Activated naive CD4-positive, alpha-beta T cell treated with anti-CD3 and anti-CD28 coated beads, Interleukin-2, amount 10 ng/mL, durations not matched to agents 7 days and 5 days (primary cell): ENCODE measurements at regions of chrX and their contacts with region 1.

Region 1: DNA sequence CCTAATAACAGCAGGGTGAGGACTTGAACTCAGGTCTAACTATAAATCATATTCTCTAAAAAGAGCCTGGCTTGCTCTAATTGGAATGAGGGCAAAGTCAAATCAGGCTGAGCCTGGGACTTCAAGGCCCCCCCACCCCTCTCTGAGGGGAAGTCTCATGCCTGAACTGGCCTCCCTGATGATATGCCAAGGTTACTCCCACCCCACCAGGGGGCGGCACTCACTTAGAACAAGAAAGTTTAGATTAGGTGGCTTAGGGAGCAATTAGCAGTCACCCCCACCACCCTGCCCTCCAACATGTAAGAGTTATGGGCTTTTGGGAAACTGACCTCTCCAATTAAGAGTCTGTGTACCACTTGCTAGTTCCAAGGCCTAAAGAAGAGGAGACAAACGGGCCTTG is 2.7 kb downstream of the FOXO4 start:
- DNase-seq: peak; percentile 83
- H3K4me3 Mint-ChIP-seq: no peak overlapping the region
- H3K27ac Mint-ChIP-seq: no peak overlapping the region
- H3K4me1 Mint-ChIP-seq: peaks cover 61% of the 10 kb centered on the region
- H3K27me3 Mint-ChIP-seq: peaks cover 12% of the 10 kb centered on the region

Region 2: DNA sequence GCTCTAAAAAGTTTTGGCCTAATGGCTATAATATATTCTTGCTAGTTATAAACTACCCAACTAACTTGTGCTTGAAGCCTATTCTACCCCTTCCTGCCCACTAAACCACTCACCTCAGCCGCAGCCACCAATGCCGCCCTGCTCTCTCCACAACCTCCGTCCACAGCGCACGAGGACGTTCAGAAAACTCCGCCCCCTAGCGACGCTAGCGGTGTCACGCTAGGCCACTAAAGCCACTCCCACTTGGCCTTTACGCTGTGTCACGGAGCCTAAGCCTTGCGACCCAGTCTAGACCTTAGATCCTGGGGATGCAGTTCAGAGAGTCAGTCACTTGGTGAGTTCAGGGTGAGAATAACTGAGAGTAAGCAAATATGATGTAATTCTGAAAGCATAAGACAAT is 189.8 kb before region 1 on chrX and contains the start of gene TEX11:
- CTCF ChIA-PET with region 1: no interaction called
- DNase-seq: no peak
- H3K4me3 Mint-ChIP-seq: no peak within 1 kb of the TSS
- H3K27ac Mint-ChIP-seq: peak within 1 kb of the TSS; percentile 35
- H3K4me1 Mint-ChIP-seq: no peaks in the 10 kb centered on the region
- H3K27me3 Mint-ChIP-seq: no peaks in the 10 kb centered on the region

Region 3: GRCh38 chrX:71000087-71000486 is 98.2 kb before region 1 on chrX:
- CTCF ChIA-PET with region 1: no interaction called
- DNase-seq: no peak
- H3K4me3 Mint-ChIP-seq: no peak overlapping the region
- H3K27ac Mint-ChIP-seq: no peak overlapping the region
- H3K4me1 Mint-ChIP-seq: no peaks in the 10 kb centered on the region
- H3K27me3 Mint-ChIP-seq: peaks cover 4% of the 10 kb centered on the region

Region 4: DNA sequence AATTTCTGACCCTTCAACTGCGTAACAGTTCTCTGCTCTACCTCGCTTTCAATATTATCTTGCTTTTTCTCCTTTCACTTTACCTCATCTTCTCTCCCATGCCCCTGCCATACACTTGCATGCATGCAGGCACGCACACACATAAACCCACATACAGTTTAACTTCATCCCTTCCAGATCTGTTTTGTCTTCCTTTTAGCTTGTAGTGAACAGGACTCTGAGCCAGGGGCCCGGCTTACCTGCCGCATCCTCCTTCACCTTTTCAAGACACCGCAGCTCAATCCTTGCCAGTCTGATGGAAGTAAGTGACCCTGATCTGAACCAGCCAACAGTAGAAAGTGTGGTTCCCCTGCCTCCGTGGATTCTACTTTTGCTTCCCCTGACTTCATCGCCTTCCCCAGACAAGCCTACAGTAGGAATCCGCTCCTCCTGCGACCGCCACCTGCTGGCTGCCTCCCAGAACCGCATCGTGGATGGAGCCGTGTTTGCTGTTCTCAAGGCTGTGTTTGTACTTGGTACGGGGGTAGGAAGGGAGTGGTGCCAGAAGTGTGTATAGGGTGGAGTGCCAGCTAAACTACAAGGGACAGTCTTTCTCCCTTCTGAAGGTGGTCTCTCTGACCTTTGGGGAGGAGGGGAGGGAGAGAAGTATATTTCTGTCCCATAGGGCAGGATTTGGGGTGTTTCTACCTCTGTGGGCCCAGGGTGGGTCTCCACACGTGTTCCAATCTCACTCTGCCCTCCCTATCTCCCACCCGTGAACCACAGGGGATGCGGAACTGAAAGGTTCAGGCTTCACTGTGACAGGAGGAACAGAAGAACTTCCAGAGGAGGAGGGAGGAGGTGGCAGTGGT is 30.8 kb after region 1 on chrX:
- CTCF ChIA-PET with region 1: interaction called, 97 read pairs
- DNase-seq: peak; percentile 81
- H3K4me3 Mint-ChIP-seq: peak overlapping the region; percentile 9
- H3K27ac Mint-ChIP-seq: peak overlapping the region; percentile 84
- H3K4me1 Mint-ChIP-seq: peaks cover 15% of the 10 kb centered on the region
- H3K27me3 Mint-ChIP-seq: no peaks in the 10 kb centered on the region